ENCODE measurements at regions of chr3 and their contacts with region 1.

Region 1: DNA sequence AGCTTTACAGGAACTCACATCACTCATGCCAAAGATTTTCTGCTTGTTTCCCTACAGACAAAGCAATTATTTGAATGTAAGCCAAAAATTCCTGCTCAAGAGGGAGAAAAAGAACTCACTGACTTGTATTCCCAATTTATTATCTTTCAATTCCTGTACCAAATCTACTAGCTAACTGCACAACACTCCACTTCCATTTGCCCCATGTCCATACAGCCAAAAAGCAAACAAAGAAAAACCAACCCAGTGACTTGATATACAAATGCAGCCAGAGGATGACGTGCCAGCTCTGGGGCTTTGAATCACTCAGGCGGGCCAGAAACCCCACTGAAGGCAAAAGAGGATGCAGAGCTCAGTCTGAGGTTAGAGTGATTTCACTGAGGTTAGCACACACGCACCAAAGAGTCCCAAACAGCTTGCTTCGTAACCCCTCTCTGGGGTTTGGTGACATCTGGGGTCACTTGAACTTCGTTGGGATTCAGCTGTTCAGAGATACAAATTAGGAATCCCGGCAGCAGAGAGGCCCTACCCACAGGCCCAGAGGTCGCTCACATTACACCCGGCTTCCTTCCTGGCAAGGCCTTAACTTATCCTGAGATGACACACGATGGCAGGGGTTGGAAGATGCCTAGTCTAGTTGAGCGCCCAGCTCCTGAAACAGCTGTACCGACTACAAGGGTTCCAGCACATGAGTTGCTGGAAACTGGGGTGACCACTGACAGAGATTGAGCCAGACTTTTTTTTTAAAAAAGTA is 1.6 kb downstream of the RFTN1 start:
- DNase-seq: peak; percentile 63 to 76
- ATAC-seq: peak; percentile 76 to 87 (median 85)
- H3K4me3 ChIP-seq: peak overlapping the region; percentile 69
- H3K27ac ChIP-seq: peak overlapping the region; percentile 76
- H3K4me1 ChIP-seq: peaks cover 48% of the 10 kb centered on the region
- H3K27me3 ChIP-seq: no peaks in the 10 kb centered on the region
- CTCF ChIP-seq: no peak

Region 2: GRCh38 chr3:16290007-16290826 is 221.6 kb before region 1 on chr3:
- intact Hi-C with region 1: loop called in 1 of 2 experiments (anchors 2 kb)
- DNase-seq: no peak
- ATAC-seq: peak in 2 of 4 donors; percentile 38 to 65
- H3K4me3 ChIP-seq: no peak overlapping the region
- H3K27ac ChIP-seq: peak overlapping the region; percentile 80
- H3K4me1 ChIP-seq: peaks cover 36% of the 10 kb centered on the region
- H3K27me3 ChIP-seq: no peaks in the 10 kb centered on the region
- CTCF ChIP-seq: peak; percentile 81

Region 3: GRCh38 chr3:16399473-16399872 is 112.4 kb before region 1 on chr3:
- intact Hi-C with region 1: loop called in 1 of 2 experiments (anchors 5 kb)
- DNase-seq: peak in 1 of 2 donors; percentile 27
- ATAC-seq: peak in 3 of 4 donors; percentile 51 to 72 (median 63)
- H3K4me3 ChIP-seq: no peak overlapping the region
- H3K27ac ChIP-seq: peak overlapping the region; percentile 39
- H3K4me1 ChIP-seq: peaks cover 53% of the 10 kb centered on the region
- H3K27me3 ChIP-seq: no peaks in the 10 kb centered on the region
- CTCF ChIP-seq: no peak

Region 4: DNA sequence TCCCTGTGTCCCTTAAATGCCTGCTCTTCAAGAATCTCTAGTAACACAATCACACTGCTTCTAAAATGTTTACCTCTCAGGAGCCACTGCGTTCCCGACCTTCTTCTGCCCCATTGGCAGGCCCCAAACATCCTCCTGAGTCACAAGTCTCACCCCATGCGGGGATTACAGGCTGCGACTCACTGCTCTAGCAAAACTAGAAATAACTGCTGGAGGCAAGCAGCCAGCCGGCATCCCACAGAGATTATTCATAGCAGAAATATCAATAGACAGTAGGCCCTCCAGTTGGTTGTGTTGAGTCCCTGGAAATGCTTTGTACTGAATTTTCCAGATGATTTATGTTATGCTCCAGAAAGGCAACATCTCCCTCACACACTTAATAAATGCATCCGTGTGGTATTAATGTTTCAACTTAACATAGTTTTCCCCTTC is 63.2 kb before region 1 on chr3:
- intact Hi-C with region 1: loop called in 1 of 2 experiments (anchors 5 kb)
- DNase-seq: peak; percentile 78 to 88
- ATAC-seq: peak; percentile 93 to 99 (median 98)
- H3K4me3 ChIP-seq: no peak overlapping the region
- H3K27ac ChIP-seq: peak overlapping the region; percentile 50
- H3K4me1 ChIP-seq: peaks cover 20% of the 10 kb centered on the region
- H3K27me3 ChIP-seq: no peaks in the 10 kb centered on the region
- CTCF ChIP-seq: no peak

Measured in psoas muscle (tissue), 8 donors.